ENCODE measurements at regions of chrX and their contacts with region 1.

Region 1: DNA sequence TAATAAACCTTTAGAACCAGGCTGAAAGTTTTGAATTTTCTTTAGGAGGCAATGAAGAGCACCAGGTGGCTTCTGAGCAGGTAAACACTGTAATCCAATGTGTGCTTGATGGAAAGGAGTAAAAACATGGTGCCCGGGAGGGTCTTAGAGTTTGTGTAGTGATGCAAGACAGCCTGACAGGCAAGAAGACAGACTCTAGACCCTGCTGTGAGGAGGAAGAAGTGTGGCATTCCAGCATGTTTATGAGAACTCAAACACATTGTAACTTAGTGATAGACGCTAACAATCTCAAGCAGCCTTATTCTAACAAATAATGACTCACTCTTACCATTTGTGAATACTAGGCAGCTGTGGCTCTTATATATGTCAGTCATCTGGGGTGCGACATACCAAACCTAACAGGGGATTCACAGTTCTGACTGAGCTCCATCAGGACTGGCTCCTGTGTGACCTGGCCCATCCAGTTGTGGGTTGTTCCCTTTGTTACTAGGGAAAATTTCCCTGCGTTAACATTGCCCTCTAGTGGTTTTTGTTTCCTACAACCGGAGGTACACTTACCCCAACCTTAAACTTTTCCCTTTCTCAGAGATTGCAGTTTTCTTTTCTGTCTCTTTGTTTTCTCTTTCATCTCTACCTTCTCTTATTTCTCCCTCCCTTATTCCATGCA is 53.8 kb downstream of the VSIG4 start:
- DNase-seq: no peak
- ATAC-seq: peak; percentile 56 to 60
- H3K4me3 ChIP-seq: no peak overlapping the region
- H3K27ac ChIP-seq: no peak overlapping the region
- H3K4me1 ChIP-seq: no peaks in the 10 kb centered on the region
- H3K27me3 ChIP-seq: no peaks in the 10 kb centered on the region
- CTCF ChIP-seq: peak in 4 of 5 experiments; percentile 33 to 56 (median 42)
- POLR2A ChIP-seq: no peak

Region 2: DNA sequence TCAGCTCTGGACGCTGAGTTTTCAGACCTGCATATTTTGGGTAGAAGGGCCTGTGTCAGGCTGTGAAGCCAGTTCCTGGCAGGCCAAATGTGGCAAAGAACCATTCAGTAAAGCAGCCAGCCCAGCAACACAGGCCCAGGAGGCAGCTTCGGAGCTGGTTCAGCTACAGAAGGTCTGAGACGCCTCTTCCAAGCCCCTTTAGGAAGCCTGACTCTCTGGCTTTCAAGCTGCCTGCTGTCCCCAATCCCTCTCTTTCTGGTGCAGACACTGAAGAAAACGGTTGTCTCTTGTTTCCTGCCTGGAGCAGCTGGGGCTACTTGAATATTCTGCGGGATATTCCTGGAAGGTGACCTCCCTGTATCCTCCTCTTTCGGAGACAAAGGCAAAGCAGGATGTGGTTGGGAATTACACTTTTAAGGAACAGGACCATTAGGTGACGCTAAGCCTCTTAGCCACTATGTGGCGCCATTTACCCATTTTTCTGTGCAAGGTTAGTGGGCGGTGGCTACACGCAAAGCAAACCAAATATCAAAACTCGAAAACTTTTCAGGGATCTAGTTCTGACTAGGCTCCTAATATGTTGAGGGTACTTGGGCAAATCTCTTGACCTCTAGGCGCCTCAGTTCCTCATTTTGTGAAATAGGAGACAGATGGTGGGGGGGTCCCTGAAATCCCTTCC is 404.3 kb before region 1 on chrX:
- in situ Hi-C with region 1: loop called (anchors 5 to 25 kb)
- intact Hi-C with region 1: loop called (anchors 1 kb)
- DNase-seq: peak in 1 of 2 donors; percentile 22
- ATAC-seq: peak; percentile 47 to 66
- H3K4me3 ChIP-seq: no peak overlapping the region
- H3K27ac ChIP-seq: no peak overlapping the region
- H3K4me1 ChIP-seq: no peaks in the 10 kb centered on the region
- H3K27me3 ChIP-seq: no peaks in the 10 kb centered on the region
- CTCF ChIP-seq: peak; percentile 53 to 77 (median 63)
- POLR2A ChIP-seq: no peak

Measured in gastrocnemius medialis (tissue), 4 donors.